KBM-7 (cell line): ENCODE measurements at regions of chr2 and their contacts with region 1.

Region 1: DNA sequence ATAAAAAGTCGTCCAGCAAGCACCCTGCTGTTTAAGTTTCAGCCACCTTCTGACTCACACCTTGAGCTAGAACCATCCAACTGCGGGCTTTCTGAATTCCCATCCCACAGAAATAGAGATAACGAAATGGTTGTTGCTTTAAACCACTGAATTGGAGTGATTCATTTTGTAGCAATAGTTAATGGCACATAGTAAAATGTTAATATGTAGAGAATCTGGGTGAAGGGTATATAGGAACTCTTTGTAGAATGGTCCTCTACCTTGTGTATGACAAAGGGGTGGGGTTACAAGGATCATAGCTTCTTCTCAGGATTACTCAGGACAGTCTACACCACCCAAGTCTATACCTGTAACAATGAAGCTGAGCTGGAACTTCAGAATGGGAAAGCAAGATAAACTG is 2.4 kb upstream of the MAPRE3 start:
- DNase-seq: no peak

Region 2: GRCh38 chr2:27016801-27017325 is 48.9 kb after region 1 on chr2:
- in situ Hi-C with region 1: loop called (anchors 10 kb)
- DNase-seq: peak; percentile 79